ENCODE measurements at regions of chr17 and their contacts with region 1.

Region 1: GRCh38 chr17:61399131-61400057 is at the start of gene TBX2:
- DNase-seq: peak; percentile 89
- H3K4me3 ChIP-seq: peak within 1 kb of the TSS; percentile 68 to 78
- H3K27ac ChIP-seq: peak within 1 kb of the TSS; percentile 94 to 95
- H3K4me1 ChIP-seq: peaks cover 20% of the 10 kb centered on the region
- H3K27me3 ChIP-seq: no peaks in the 10 kb centered on the region
- CTCF ChIP-seq: no peak
- POLR2A ChIP-seq: no peak
- total RNA-seq, gene TBX2: 20.1 to 29.6 TPM

Region 2: GRCh38 chr17:61157246-61157886 is 242.0 kb before region 1 on chr17:
- intact Hi-C with region 1: loop called (anchors 5 kb)
- DNase-seq: peak; percentile 69
- H3K4me3 ChIP-seq: no peak overlapping the region
- H3K27ac ChIP-seq: peak overlapping the region in 1 of 2 donors; percentile 75
- H3K4me1 ChIP-seq: peaks cover 10% of the 10 kb centered on the region
- H3K27me3 ChIP-seq: no peaks in the 10 kb centered on the region
- CTCF ChIP-seq: no peak
- POLR2A ChIP-seq: no peak